ENCODE measurements at regions of chr1 and their contacts with region 1.

Region 1: GRCh38 chr1:239898062-239898730 is 193.5 kb upstream of the FMN2 start:
- DNase-seq: peak; percentile 33 to 83 (median 74)
- H3K4me3 ChIP-seq: peak overlapping the region in 48 of 59 donors; percentile 0 to 57 (median 28)
- H3K27ac ChIP-seq: peak overlapping the region in 27 of 59 donors; percentile 1 to 71 (median 36)
- H3K27me3 ChIP-seq: no peaks in the 10 kb centered on the region
- CTCF ChIP-seq: peak; percentile 91 to 99 (median 97)

Region 2: GRCh38 chr1:239413916-239414315 is 484.3 kb before region 1 on chr1:
- intact Hi-C with region 1: loop called (anchors 5 kb)
- DNase-seq: no peak
- H3K4me3 ChIP-seq: no peak overlapping the region
- H3K27ac ChIP-seq: no peak overlapping the region
- H3K27me3 ChIP-seq: no peaks in the 10 kb centered on the region
- CTCF ChIP-seq: no peak

Region 3: GRCh38 chr1:239763850-239764249 is 134.3 kb before region 1 on chr1:
- intact Hi-C with region 1: no loop called
- DNase-seq: no peak
- H3K4me3 ChIP-seq: no peak overlapping the region
- H3K27ac ChIP-seq: no peak overlapping the region
- H3K27me3 ChIP-seq: peaks cover 0 to 3% (median 0%) of the 10 kb centered on the region in 45 donors
- CTCF ChIP-seq: no peak